ENCODE measurements at regions of chr4 and their contacts with region 1.

Region 1: DNA sequence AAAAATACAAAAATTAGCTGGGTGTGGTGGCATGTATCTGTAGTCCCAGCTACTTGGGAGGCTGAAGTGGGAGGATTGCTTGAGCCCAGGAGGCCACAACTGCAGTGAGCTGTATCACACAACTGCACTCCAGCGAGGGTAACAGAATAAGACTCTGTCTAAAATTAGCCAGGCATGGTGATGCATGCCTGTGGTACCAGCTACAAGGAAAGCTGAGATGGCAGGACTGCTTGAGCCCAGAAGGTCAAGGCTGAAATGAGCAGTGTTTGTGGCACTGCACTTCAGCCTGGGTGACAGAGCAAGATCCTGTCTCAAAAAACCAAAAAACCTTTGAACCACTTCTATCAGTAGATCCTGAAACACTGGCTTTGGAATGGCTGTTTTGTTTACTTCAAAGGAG is 10.2 kb downstream of the GRSF1 start:
- DNase-seq: peak in 5 of 7 donors; percentile 45 to 60 (median 51)
- H3K4me3 ChIP-seq: no peak overlapping the region
- H3K27ac ChIP-seq: peak overlapping the region in 1 of 5 donors; percentile 53
- H3K4me1 ChIP-seq: no peaks in the 10 kb centered on the region
- H3K27me3 ChIP-seq: no peaks in the 10 kb centered on the region
- CTCF ChIP-seq: no peak
- POLR2A ChIP-seq: no peak

Region 2: GRCh38 chr4:70298051-70298450 is 531.4 kb before region 1 on chr4:
- intact Hi-C with region 1: no loop called
- DNase-seq: no peak
- H3K4me3 ChIP-seq: no peak overlapping the region
- H3K27ac ChIP-seq: no peak overlapping the region
- H3K4me1 ChIP-seq: no peaks in the 10 kb centered on the region
- H3K27me3 ChIP-seq: no peaks in the 10 kb centered on the region
- CTCF ChIP-seq: no peak
- POLR2A ChIP-seq: no peak

Region 3: DNA sequence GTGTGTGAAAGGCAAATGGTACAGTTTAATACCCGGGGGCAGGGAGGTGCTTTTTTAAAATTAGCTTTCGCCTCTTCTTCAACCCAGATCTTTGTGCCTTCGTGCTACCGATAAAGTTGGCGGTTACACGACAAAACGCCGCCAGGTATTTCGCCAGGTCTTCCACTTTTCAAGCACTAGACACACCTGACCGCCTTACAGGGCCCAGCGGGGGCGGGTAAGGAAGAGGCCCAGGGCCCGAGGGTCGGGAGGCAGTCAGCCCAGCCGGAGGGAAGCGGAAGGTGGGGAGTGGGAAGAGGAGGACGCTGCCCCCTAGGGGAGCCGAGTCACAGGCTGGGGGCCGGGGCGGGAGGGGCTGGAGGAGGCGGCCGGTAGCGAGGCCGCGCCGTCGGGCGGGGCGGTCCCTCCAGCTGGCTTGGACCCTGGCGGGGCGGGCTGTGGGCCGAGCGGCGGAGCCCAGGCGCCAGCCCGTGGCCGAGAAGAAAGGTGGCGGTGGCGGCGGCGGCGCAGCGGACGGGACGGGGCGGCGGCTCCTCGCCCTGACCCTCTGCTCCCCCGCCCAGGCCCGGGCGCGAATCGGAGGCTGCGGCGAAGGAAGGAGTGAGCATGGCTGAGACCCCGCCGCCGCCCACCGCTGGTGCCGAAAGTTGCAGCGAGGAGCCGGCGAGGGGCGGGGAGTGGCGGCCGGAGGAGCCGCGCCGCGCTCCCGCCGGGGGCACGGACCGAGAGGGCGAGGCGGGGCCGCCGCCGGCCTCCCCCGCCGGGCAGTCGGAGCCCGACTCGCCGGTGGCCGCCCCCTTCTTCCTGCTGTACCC is 125.0 kb before region 1 on chr4:
- intact Hi-C with region 1: loop called in 1 of 2 experiments (anchors 10 kb)
- DNase-seq: peak; percentile 81 to 88 (median 84)
- H3K4me3 ChIP-seq: peak overlapping the region; percentile 47 to 98 (median 90)
- H3K27ac ChIP-seq: peak overlapping the region; percentile 91 to 98 (median 97)
- H3K4me1 ChIP-seq: peaks cover 11 to 28% of the 10 kb centered on the region in 2 donors
- H3K27me3 ChIP-seq: no peaks in the 10 kb centered on the region
- CTCF ChIP-seq: peak in 5 of 6 experiments; percentile 10 to 36 (median 27)
- POLR2A ChIP-seq: peak; percentile 28 to 70